GM12878 (cell line): ENCODE measurements at regions of chr3 and their contacts with region 1.

Region 1: DNA sequence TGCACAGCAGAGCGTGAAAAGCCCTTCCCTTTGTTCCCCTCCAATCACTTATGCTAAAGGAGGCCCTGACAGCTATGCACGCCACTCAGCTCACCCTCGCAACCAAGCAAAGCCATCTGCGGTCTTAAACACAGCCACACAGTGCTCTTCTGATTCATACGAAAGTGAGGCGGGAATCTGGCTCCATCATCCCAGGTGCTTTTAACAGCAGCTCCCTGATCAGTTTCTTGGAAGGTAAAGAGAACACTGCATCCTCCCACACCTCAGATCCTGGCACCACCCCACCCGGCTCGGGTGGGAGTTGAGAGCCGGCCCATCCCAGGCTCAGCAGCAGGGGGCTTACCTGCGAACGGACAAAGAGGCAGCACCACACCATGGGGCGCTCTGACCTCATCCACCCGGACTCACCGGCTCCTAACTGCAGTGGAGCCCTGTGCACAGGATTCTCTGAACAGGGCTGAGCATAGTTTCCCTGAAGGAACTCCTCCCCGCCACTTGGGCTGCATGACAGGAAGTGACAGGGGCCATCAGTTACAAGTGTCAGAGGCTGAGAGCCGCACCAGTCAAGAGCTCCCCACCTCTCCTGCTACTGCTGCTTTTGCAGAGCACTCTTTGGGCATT is 114.3 kb upstream of the ARHGEF3 start:
- DNase-seq: peak; percentile 32
- ATAC-seq: peak; percentile 72
- H3K4me3 ChIP-seq: peak overlapping the region; percentile 66
- H3K27ac ChIP-seq: peak overlapping the region; percentile 92
- H3K4me1 ChIP-seq: peaks cover 49% of the 10 kb centered on the region
- H3K27me3 ChIP-seq: no peaks in the 10 kb centered on the region
- CTCF ChIP-seq: no peak
- EP300 ChIP-seq: 0 out of 4 replicates have a peak, but pooled peaks of 1 of the 2 experiments have one; percentile 20
- POLR2A ChIP-seq: peak; percentile 56
- RAD21 ChIP-seq: no peak

Region 2: GRCh38 chr3:56423661-56424099 is 492.4 kb before region 1 on chr3:
- CTCF ChIA-PET with region 1: no interaction called
- POLR2A ChIA-PET with region 1: no interaction called
- RAD21 ChIA-PET with region 1: no interaction called
- SMC1A ChIA-PET with region 1: no interaction called
- in situ Hi-C with region 1: no loop called
- intact Hi-C with region 1: no loop called
- DNase-seq: no peak
- ATAC-seq: no peak
- H3K4me3 ChIP-seq: no peak overlapping the region
- H3K27ac ChIP-seq: no peak overlapping the region
- H3K4me1 ChIP-seq: no peaks in the 10 kb centered on the region
- H3K27me3 ChIP-seq: peaks cover 0 to 2% of the 10 kb centered on the region in 2 experiments; a peak in 2 of 4 replicates
- CTCF ChIP-seq: no peak
- EP300 ChIP-seq: no peak
- POLR2A ChIP-seq: no peak
- RAD21 ChIP-seq: no peak

Region 3: GRCh38 chr3:56862352-56863074 is 53.6 kb before region 1 on chr3:
- CTCF ChIA-PET with region 1: interaction called, 3 read pairs
- POLR2A ChIA-PET with region 1: no interaction called
- RAD21 ChIA-PET with region 1: interaction called, 19 read pairs
- SMC1A ChIA-PET with region 1: interaction called, 15 read pairs
- in situ Hi-C with region 1: no loop called
- intact Hi-C with region 1: loop called (anchors 2 kb)
- DNase-seq: no peak
- ATAC-seq: peak; percentile 73
- H3K4me3 ChIP-seq: no peak overlapping the region
- H3K27ac ChIP-seq: no peak overlapping the region; the same call in 1 of the 2 replicates
- H3K4me1 ChIP-seq: peaks cover 23% of the 10 kb centered on the region
- H3K27me3 ChIP-seq: no peaks in the 10 kb centered on the region
- CTCF ChIP-seq: no peak
- EP300 ChIP-seq: no peak; a peak in 1 of 4 replicates
- POLR2A ChIP-seq: no peak
- RAD21 ChIP-seq: 0 out of 2 replicates have a peak, but pooled peaks have one; percentile 9

Region 4: GRCh38 chr3:56904552-56905215 is 11.4 kb before region 1 on chr3:
- CTCF ChIA-PET with region 1: interaction called, 10 read pairs
- POLR2A ChIA-PET with region 1: interaction called, 5 read pairs
- RAD21 ChIA-PET with region 1: interaction called, 12 read pairs
- SMC1A ChIA-PET with region 1: interaction called, 25 read pairs
- in situ Hi-C with region 1: no loop called
- intact Hi-C with region 1: no loop called
- DNase-seq: no peak
- ATAC-seq: peak; percentile 16; the same call in 1 of the 3 replicates
- H3K4me3 ChIP-seq: no peak overlapping the region
- H3K27ac ChIP-seq: no peak overlapping the region
- H3K4me1 ChIP-seq: peaks cover 25% of the 10 kb centered on the region
- H3K27me3 ChIP-seq: no peaks in the 10 kb centered on the region
- CTCF ChIP-seq: no peak
- EP300 ChIP-seq: no peak
- POLR2A ChIP-seq: no peak
- RAD21 ChIP-seq: no peak

Region 5: DNA sequence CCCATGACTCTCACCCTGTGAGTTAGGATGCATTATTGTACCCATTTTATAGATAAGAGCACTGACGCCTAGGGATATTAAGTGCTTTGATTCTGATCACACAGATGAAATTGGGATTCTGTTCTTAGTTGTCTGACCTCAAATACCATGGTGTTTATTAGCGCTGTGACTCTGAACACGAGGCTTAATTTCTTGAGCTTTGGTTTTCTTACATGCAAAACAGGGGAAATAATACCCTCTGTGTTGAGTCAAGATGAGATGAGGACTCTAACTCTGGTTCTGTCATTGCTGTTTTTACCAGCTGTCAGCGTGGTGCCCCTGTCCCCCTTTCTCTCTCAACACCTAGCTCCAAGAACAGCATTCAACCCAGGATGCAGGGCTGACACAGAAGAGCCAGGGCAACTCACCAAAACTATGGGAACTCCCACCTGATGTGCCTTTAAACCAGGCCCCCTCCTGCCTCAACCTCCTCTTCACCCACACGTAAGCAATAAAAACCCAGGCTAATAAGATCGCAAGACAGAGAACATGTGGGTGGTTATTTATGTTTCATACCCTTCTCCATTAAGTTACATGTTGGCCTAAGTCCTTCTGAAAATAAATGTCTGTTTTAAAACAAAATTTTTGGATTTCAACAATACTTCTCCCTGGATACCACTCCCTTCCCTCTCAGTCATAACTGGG is 44.3 kb after region 1 on chr3:
- CTCF ChIA-PET with region 1: interaction called, 11 read pairs
- POLR2A ChIA-PET with region 1: interaction called, 9 read pairs
- RAD21 ChIA-PET with region 1: interaction called, 12 read pairs
- SMC1A ChIA-PET with region 1: interaction called, 42 read pairs
- in situ Hi-C with region 1: no loop called
- intact Hi-C with region 1: loop called (anchors 2 kb)
- DNase-seq: peak; percentile 39
- ATAC-seq: peak; percentile 88
- H3K4me3 ChIP-seq: no peak overlapping the region
- H3K27ac ChIP-seq: no peak overlapping the region
- H3K4me1 ChIP-seq: peaks cover 23% of the 10 kb centered on the region
- H3K27me3 ChIP-seq: no peaks in the 10 kb centered on the region
- CTCF ChIP-seq: no peak
- EP300 ChIP-seq: peak in 1 of 2 experiments; percentile 50; a peak in 1 of 4 replicates
- POLR2A ChIP-seq: no peak
- RAD21 ChIP-seq: no peak

Region 6: GRCh38 chr3:57397175-57398026 is 481.3 kb after region 1 on chr3:
- CTCF ChIA-PET with region 1: no interaction called
- POLR2A ChIA-PET with region 1: no interaction called
- RAD21 ChIA-PET with region 1: no interaction called
- SMC1A ChIA-PET with region 1: no interaction called
- in situ Hi-C with region 1: no loop called
- intact Hi-C with region 1: no loop called
- DNase-seq: peak; percentile 39
- ATAC-seq: peak; percentile 100
- H3K4me3 ChIP-seq: no peak overlapping the region
- H3K27ac ChIP-seq: no peak overlapping the region
- H3K4me1 ChIP-seq: no peaks in the 10 kb centered on the region
- H3K27me3 ChIP-seq: no peaks in the 10 kb centered on the region
- CTCF ChIP-seq: peak; percentile 87 to 97 (median 97)
- EP300 ChIP-seq: no peak
- POLR2A ChIP-seq: no peak
- RAD21 ChIP-seq: peak; percentile 94